ENCODE measurements at regions of chr13 and their contacts with region 1.

Region 1: GRCh38 chr13:73671732-73672131 is 462.5 kb downstream of the KLF12 start:
- DNase-seq: no peak
- ATAC-seq: no peak

Region 2: GRCh38 chr13:73653688-73654087 is 18.0 kb before region 1 on chr13:
- intact Hi-C with region 1: loop called (anchors 2 kb)
- DNase-seq: no peak
- ATAC-seq: no peak

Region 3: GRCh38 chr13:74174810-74175209 is 503.1 kb after region 1 on chr13:
- intact Hi-C with region 1: no loop called
- DNase-seq: no peak
- ATAC-seq: no peak

Measured in Right ventricle myocardium inferior (tissue), 1 donor.